Prostate gland (tissue), 2 donors: ENCODE measurements at regions of chr19 and their contacts with region 1.

Region 1: DNA sequence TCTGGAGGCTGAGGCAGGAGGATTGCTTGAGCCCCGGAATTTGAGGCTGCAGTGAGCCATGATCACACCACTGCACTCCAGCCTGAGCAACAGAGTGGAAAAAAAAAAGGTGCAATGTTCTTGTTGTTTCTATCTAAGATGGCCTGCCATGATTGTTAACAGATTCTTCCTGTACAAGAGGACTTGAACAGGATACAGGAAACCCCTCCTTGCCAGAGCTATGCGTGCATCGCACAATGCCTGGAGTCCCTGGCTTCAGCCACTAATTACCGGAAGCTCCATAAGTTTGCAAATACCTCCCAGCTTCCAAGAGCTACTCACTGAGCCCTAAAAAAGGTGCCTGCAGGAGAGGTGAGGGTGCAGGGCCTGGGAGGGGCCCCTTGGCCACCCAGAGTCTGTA is 13.1 kb upstream of the HIF3A start:
- DNase-seq: no peak
- H3K4me3 ChIP-seq: no peak overlapping the region
- H3K27ac ChIP-seq: no peak overlapping the region
- H3K4me1 ChIP-seq: no peaks in the 10 kb centered on the region
- H3K27me3 ChIP-seq: no peaks in the 10 kb centered on the region
- CTCF ChIP-seq: no peak
- POLR2A ChIP-seq: no peak

Region 2: DNA sequence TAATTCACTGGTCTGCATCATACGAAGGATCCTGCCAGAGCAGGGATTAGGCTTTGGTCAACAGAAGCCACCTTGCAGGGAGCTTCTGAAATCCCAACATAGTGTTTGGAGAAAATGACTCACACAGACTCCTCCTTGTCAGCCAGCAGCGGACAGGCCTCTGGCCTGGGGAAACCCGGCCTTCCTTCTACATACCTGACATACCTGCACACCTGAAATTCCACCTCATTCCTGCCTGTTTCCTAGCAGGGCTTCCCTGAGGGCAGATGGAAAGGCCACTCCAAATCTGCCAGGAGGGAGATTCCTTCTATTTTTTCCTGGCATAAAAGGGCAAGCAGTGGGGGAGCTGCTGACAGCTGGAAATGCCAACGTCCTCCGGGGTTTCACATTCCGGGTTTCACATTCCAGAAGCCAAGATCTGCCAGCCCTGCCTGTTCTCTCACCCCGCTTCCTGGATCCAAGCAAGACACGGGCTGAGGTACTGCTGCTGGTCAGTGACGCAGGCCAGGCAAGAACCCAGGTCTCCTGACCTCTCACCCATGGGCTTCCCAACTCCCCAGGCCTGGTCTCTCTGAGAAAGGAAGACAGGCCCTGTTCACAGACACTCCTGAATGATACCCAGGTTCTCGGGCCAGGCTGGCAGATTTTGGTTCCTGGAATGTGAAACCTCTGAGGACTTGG is 72.4 kb before region 1 on chr19:
- intact Hi-C with region 1: no loop called
- DNase-seq: peak; percentile 53
- H3K4me3 ChIP-seq: no peak overlapping the region
- H3K27ac ChIP-seq: peak overlapping the region; percentile 37 to 49
- H3K4me1 ChIP-seq: no peaks in the 10 kb centered on the region
- H3K27me3 ChIP-seq: no peaks in the 10 kb centered on the region
- CTCF ChIP-seq: no peak
- POLR2A ChIP-seq: no peak

Region 3: GRCh38 chr19:46346821-46347571 is 63.2 kb after region 1 on chr19 and contains the start of gene PPP5C:
- intact Hi-C with region 1: loop called (anchors 5 kb)
- DNase-seq: peak; percentile 85
- H3K4me3 ChIP-seq: peak within 1 kb of the TSS; percentile 56 to 82
- H3K27ac ChIP-seq: peak within 1 kb of the TSS; percentile 66 to 83
- H3K4me1 ChIP-seq: peaks cover 9% of the 10 kb centered on the region
- H3K27me3 ChIP-seq: no peaks in the 10 kb centered on the region
- CTCF ChIP-seq: peak; percentile 59 to 88 (median 83)
- POLR2A ChIP-seq: peak; percentile 71
- total RNA-seq, gene PPP5C: 81.4 to 84.3 TPM

Region 4: GRCh38 chr19:46513461-46514236 is 229.9 kb after region 1 on chr19:
- intact Hi-C with region 1: loop called (anchors 5 kb)
- DNase-seq: peak; percentile 34
- H3K4me3 ChIP-seq: no peak overlapping the region
- H3K27ac ChIP-seq: no peak overlapping the region
- H3K4me1 ChIP-seq: no peaks in the 10 kb centered on the region
- H3K27me3 ChIP-seq: no peaks in the 10 kb centered on the region
- CTCF ChIP-seq: peak; percentile 93 to 97 (median 95)
- POLR2A ChIP-seq: no peak